Head of caudate nucleus (tissue), 42 donors: ENCODE measurements at regions of chr9 and their contacts with region 1.

Region 1: DNA sequence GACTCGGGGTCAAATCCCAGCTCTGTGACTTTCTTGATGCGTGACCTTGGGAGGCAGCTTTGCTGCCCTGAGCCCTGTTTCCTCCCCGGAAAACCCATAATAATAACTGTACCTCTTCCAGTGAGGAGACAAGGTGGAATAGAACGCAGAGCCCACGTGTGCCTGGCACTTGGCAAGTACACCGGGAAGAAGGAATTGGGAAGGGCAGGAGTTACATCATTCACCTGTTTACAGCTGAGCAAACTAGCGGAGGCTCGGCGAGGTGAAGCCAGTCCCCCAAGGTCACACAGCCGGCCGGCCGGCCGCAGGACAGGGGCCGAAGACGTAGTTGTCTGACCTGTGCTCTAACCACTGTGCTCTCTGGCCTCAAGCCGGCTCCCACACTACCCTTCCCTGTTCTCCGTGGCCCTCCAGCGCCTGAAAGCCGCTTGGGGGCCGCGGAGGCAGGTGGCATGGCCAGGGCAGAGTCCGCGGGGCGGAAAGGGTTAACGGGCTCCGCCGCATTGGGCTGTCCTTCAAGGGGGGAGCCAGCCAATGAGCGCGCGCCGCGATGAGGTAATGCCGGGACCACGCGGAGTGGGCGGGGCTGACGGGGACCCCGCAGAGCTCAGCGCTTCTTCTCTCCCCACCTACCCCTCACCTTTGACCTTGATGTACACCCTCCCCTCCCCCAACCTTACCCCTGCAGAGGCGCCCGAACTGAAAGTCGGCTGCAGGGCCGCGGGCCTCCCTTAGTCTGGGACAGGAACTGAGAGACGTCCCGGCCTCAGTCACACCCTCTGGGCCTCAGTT is 125.2 kb downstream of the C9orf50 start:
- DNase-seq: peak; percentile 94 to 99 (median 97)

Region 2: DNA sequence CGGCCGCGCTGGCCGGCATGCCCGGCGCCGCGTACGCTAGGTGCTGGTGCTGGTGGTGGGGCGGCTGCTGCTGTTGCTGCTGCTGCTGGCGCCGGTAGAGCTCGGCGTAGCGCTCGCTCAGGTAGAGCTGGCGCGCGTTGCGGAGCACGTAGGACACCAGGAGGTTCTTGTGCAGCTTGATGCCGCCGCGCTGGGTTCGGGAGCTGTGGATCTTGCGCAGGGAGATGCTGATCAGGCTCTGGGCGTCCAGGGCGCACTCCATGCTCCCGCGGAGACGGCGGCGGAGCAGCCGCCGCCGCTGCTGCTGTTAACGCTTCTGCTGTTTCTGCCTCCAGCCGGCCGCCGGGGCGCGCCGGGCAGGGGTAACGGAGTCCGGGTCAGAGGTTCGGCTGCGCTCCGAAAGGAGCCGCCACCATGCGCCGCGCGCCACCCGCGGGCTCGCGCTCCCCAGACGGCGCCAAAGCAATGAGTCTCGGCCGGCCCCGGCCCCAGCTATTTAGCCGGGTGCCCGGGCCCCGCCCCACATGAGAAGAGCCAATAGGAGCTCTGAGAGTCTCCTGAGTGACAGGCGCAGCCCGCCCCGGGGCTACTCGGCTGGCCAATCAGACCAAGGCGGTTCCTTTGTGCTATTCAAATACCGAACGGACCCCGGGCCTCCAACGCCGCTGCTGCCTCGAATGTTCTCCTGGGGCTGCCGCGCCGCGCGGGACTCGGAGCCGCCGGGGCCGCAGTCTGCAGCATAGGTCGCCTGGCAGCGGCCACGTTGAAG is 317.8 kb before region 1 on chr9 and contains the start of gene IER5L:
- intact Hi-C with region 1: loop called (anchors 10 kb)
- DNase-seq: peak; percentile 93 to 99 (median 98)

Region 3: GRCh38 chr9:129202613-129203555 is 292.8 kb before region 1 on chr9:
- intact Hi-C with region 1: no loop called
- DNase-seq: peak; percentile 75 to 97 (median 93)

Region 4: GRCh38 chr9:129413537-129414376 is 82.0 kb before region 1 on chr9:
- intact Hi-C with region 1: loop called (anchors 10 kb)
- DNase-seq: peak; percentile 96 to 100 (median 99)

Region 5: DNA sequence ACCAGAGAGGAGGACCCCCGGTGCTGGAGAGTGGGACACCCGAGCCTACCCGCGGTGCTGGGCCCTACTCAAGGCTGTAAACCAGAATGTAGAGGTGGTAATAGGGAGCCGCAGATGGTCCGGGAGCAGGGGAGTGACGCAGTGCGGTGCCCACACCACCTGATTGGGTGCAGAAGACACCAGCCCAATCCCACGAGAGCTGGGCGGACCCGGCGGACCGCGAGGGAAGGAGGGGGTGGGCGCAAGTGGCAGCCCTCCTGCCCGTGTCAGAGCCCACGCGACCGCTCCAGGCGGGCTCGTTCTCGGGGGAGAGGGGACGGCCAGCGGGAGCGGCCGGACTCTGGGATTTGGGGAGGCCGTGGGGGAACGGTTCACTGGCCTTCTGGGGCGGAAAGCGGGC is 54.0 kb after region 1 on chr9:
- intact Hi-C with region 1: loop called (anchors 10 kb)
- DNase-seq: peak; percentile 59 to 94 (median 81)

Region 6: DNA sequence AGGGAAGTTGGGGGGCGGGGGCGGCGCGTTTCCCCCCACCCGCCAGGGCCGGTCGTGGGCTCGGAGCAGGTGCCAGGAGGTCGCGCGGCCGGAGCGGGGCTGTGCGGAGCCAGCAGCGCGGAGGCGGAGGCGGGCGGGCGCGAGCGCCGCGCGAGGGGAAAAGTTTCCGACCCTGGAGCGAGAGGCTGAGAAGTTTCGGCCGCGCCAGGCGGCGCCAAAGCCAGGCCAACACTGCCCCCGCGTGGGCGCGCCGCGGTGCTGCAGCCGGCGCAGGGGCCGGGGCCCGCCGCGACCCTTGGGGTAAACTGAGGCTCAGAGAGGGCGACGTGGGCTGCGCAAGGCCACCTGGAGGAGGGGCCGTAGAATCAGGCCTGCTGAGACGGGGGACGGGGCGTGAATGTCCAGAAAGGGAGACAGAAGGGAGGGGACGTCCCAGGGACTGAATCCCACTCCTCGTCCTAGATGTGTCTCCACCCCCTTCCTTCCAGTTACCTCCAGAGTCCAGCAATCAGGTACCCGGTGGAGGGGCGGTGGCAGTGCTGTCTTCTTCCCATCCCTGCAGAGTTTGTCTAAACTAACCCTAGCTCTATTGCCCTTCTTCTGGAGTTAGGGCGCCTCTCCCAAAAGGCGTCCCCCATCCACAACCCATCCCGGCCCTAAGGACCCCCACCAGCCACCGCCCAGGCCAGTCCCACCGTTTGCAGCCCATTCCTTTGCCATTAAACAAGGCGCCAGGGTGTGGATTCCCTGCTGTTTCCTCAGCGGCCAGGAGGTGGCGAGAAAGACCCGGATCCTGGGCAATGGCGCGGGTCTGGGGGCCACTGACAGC is 115.0 kb after region 1 on chr9:
- intact Hi-C with region 1: loop called (anchors 10 kb)
- DNase-seq: peak; percentile 65 to 89 (median 80)